CD14-positive monocyte (primary cell): ENCODE measurements at regions of chr1 and their contacts with region 1.

Region 1: DNA sequence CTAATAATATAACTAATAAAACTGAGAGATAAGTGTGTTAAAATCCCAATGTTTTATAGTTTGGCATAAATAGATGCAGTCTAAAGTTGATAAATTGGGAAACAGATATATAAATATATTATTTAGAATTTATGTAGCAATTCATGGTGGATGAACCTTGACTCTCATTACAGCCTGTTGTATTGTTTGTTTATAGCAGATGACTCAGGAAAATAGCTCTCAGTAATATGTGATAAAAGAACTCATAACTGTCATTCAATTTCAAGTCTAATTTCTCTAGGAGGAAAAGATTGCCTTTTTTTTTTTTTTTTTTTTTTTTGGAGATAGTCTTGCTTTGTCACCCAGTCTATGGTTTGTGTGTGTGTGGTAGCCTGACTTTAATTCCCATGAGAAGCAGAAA is 603.2 kb upstream of the PKN2 start:
- DNase-seq: no peak
- H3K4me3 ChIP-seq: no peak overlapping the region
- H3K4me3 Mint-ChIP-seq: no peak overlapping the region
- H3K27ac ChIP-seq: no peak overlapping the region
- H3K27ac Mint-ChIP-seq: no peak overlapping the region
- H3K4me1 ChIP-seq: no peaks in the 10 kb centered on the region
- H3K4me1 Mint-ChIP-seq: peaks cover 1% of the 10 kb centered on the region
- H3K27me3 ChIP-seq: no peaks in the 10 kb centered on the region
- H3K27me3 Mint-ChIP-seq: peaks cover 0 to 2% (median 0%) of the 10 kb centered on the region in 3 donors
- CTCF ChIP-seq: no peak

Region 2: DNA sequence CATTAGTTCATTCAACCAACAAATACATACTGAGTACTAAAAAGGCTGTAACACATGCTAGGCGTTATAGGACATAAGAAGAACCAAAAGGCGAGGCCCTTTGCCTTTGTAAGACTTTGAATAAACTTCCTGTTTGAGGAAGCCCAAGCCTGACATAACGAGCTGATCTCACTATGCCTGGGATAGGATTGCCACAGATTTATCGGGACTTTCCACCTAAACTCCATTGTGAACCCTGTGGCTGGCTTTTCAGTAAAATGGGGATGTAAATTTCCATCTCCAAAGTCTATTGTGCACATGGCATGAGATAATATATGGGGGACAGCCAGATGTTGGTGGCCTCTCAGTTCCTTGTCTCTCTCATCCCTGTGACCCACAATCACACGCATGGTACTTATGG is 710.3 kb before region 1 on chr1:
- intact Hi-C with region 1: loop called in 1 of 2 experiments (anchors 5 kb)
- DNase-seq: no peak
- H3K4me3 ChIP-seq: no peak overlapping the region
- H3K4me3 Mint-ChIP-seq: no peak overlapping the region
- H3K27ac ChIP-seq: no peak overlapping the region
- H3K27ac Mint-ChIP-seq: no peak overlapping the region
- H3K4me1 ChIP-seq: no peaks in the 10 kb centered on the region
- H3K4me1 Mint-ChIP-seq: no peaks in the 10 kb centered on the region
- H3K27me3 ChIP-seq: no peaks in the 10 kb centered on the region
- H3K27me3 Mint-ChIP-seq: peaks cover 0 to 2% (median 0%) of the 10 kb centered on the region in 3 donors
- CTCF ChIP-seq: no peak

Region 3: GRCh38 chr1:88111806-88112205 is 30.9 kb after region 1 on chr1:
- intact Hi-C with region 1: no loop called
- DNase-seq: no peak
- H3K4me3 ChIP-seq: no peak overlapping the region
- H3K4me3 Mint-ChIP-seq: no peak overlapping the region
- H3K27ac ChIP-seq: no peak overlapping the region
- H3K27ac Mint-ChIP-seq: no peak overlapping the region
- H3K4me1 ChIP-seq: no peaks in the 10 kb centered on the region
- H3K4me1 Mint-ChIP-seq: no peaks in the 10 kb centered on the region
- H3K27me3 ChIP-seq: no peaks in the 10 kb centered on the region
- H3K27me3 Mint-ChIP-seq: no peaks in the 10 kb centered on the region
- CTCF ChIP-seq: no peak